ENCODE measurements at regions of chr15 and their contacts with region 1.

Region 1: GRCh38 chr15:74322181-74323076 is 45.0 kb downstream of the CYP11A1 start:
- DNase-seq: peak; percentile 55
- H3K4me3 ChIP-seq: no peak overlapping the region
- H3K27ac ChIP-seq: no peak overlapping the region
- H3K27me3 ChIP-seq: no peaks in the 10 kb centered on the region
- CTCF ChIP-seq: peak; percentile 94

Region 2: GRCh38 chr15:74123138-74123443 is 199.3 kb before region 1 on chr15:
- in situ Hi-C with region 1: loop called (anchors 25 kb)
- DNase-seq: no peak
- H3K4me3 ChIP-seq: no peak overlapping the region
- H3K27ac ChIP-seq: no peak overlapping the region
- H3K27me3 ChIP-seq: peaks cover 31% of the 10 kb centered on the region
- CTCF ChIP-seq: peak; percentile 9